Right lobe of liver (tissue), 6 donors: ENCODE measurements at regions of chr3 and their contacts with region 1.

Region 1: DNA sequence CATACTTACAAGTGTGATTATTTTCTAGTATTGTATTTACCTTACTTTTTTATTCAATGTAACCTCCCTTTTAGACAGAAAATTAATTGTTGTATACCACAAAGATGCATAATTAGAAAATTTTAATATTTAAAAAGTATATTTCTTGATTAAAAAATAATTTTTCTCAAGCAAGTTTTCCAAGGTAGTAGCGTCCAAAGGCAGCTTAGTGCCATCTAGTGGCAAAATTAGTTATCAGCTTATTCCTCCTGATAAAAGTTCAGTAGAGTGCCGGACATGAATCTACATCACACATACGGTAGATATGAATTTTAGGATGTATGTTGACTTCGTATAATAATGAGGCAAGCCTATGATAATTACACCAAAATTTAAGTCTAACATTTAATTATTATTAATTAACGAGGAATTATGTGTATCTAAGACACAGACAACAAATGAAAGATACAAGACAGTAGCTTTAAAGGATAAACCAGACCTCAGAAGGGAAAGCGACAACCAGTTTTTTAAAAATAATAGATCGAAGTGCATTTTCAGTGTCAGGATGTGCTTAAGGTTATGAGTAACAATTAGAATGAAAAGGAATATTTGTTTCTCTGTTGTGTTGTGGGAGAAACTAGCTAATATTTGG is 405.9 kb downstream of the ROBO1 start:
- DNase-seq: no peak
- ATAC-seq: peak; percentile 69 to 81 (median 76)
- H3K4me3 ChIP-seq: no peak overlapping the region
- H3K27ac ChIP-seq: no peak overlapping the region
- H3K4me1 ChIP-seq: no peaks in the 10 kb centered on the region
- H3K27me3 ChIP-seq: no peaks in the 10 kb centered on the region
- CTCF ChIP-seq: peak; percentile 46 to 86 (median 84)
- POLR2A ChIP-seq: no peak

Region 2: DNA sequence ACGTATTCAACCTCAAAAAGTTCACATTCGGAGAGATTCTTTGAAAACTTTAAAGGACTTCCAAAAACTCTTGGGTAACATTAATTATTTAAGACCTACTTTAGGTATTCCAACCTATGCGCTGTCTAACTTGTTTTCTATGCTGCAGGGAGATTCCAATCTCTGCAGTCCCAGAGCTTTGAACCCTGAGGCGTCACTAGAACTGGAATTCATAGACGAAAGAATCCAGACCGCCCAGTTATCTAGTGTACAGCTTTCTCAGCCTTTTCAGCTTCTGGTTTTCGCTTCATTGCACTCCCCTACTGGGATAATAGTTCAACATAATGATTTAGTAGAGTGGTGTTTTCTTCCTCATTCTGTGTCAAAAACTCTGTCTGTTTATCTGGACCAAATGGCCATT is 305.4 kb before region 1 on chr3:
- intact Hi-C with region 1: no loop called
- DNase-seq: no peak
- ATAC-seq: no peak
- H3K4me3 ChIP-seq: no peak overlapping the region
- H3K27ac ChIP-seq: no peak overlapping the region
- H3K4me1 ChIP-seq: no peaks in the 10 kb centered on the region
- H3K27me3 ChIP-seq: no peaks in the 10 kb centered on the region
- CTCF ChIP-seq: no peak
- POLR2A ChIP-seq: no peak

Region 3: DNA sequence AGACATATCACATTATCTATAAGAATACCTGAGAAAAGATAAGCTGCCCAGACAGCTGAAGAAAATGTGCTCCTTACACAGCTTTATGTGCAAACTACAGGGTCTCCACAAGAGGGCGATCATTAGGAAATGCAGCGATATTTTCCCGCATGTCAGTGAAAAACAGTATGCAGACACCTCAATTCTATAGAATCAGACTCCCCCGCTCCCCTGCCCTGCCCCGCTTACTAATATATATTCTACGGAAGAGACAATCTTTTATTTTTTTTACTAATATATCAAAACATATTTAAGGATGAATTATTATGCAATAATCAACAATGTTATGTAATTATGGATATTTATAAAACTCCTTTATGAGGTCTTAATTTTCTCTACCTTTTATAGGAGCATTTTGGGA is 275.3 kb before region 1 on chr3:
- intact Hi-C with region 1: loop called in 1 of 2 experiments (anchors 10 kb)
- DNase-seq: peak in 1 of 3 donors; percentile 50
- ATAC-seq: peak; percentile 79 to 88 (median 86)
- H3K4me3 ChIP-seq: no peak overlapping the region
- H3K27ac ChIP-seq: no peak overlapping the region
- H3K4me1 ChIP-seq: no peaks in the 10 kb centered on the region
- H3K27me3 ChIP-seq: no peaks in the 10 kb centered on the region
- CTCF ChIP-seq: peak; percentile 56 to 78 (median 74)
- POLR2A ChIP-seq: no peak

Region 4: GRCh38 chr3:79297237-79297960 is 64.5 kb before region 1 on chr3:
- intact Hi-C with region 1: no loop called
- DNase-seq: no peak
- ATAC-seq: no peak
- H3K4me3 ChIP-seq: no peak overlapping the region
- H3K27ac ChIP-seq: no peak overlapping the region
- H3K4me1 ChIP-seq: no peaks in the 10 kb centered on the region
- H3K27me3 ChIP-seq: no peaks in the 10 kb centered on the region
- CTCF ChIP-seq: no peak
- POLR2A ChIP-seq: no peak